IMR-90 (cell line): ENCODE measurements at regions of chr9 and their contacts with region 1.

Region 1: DNA sequence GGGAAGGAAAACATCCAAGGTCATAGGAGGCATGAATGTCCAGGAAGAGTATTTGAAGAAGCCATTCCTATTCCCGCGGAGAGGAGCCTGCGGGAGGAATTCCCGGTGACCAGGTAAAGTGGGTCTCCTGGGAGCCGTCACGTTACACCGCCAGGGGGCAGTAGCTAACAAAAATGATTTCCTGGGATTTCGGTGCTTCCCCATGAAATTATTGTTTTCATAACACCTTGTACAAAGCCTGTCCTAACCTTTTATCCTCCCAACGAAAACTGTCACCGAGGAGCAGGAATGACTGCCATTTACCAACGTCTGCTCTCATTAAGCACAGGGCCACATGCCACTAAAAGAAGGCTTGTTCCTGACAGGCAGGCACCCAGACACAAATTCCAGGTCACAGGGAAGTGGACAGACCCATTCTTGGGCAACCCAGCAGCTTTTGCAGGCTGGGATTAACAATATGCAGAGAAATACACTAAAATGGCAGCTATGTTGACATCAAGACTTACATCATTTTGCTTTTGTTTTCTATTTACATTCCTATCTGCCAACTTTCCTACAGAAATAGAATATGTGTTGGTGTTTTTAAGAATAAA is 41.2 kb upstream of the CTSL start:
- DNase-seq: peak; percentile 24
- ATAC-seq: peak; percentile 40; the same call in 1 of the 2 replicates
- H3K4me3 ChIP-seq: no peak overlapping the region
- H3K27ac ChIP-seq: no peak overlapping the region
- H3K4me1 ChIP-seq: peaks cover 4% of the 10 kb centered on the region
- H3K27me3 ChIP-seq: peaks cover 2% of the 10 kb centered on the region
- CTCF ChIP-seq: peak; percentile 70
- POLR2A ChIP-seq: no peak
- RAD21 ChIP-seq: peak; percentile 68

Region 2: DNA sequence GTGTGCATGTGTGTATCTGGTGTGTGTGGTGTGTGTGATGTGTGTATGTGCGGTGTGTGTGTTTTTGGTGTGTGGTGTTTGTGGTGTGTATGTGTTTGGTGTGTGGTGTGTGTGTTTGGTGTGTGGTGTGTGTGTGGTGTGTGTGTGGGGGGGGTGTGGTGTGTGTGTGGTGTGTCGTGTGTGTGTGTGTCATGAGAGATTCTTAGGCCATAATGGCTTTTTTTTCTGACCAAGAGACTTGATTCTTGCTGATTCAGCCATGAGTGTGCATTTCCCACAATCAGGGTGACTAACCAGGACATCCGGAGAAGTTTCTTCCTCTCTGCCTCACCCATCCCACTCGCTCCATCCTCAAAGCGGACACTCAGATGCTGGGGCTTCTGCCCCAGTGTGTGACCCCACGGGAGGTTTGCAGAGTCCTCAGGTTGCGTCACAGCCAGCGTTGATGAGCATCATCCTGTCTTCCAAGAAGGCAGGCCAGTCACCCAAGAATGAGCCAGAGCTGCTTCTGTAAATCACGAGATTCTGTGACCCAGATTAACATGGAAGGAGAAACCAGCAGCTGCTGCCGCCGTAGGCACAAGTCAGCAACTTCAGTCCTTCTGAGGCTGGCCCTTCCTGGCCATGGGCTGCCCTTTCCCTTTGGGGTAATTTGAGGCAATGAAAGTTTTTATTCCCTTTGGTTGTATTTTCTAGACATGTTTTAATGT is 28.7 kb after region 1 on chr9:
- CTCF ChIA-PET with region 1: interaction called, 13 read pairs
- POLR2A ChIA-PET with region 1: no interaction called
- dilution Hi-C with region 1: no loop called
- in situ Hi-C with region 1: no loop called
- intact Hi-C with region 1: no loop called
- DNase-seq: peak; percentile 99
- ATAC-seq: peak; percentile 87
- H3K4me3 ChIP-seq: peak overlapping the region; percentile 3; the same call in 1 of the 2 replicates
- H3K27ac ChIP-seq: peak overlapping the region; percentile 98
- H3K4me1 ChIP-seq: peaks cover 16% of the 10 kb centered on the region
- H3K27me3 ChIP-seq: no peaks in the 10 kb centered on the region
- CTCF ChIP-seq: 0 out of 2 replicates have a peak, but pooled peaks have one; percentile 8
- POLR2A ChIP-seq: peak; percentile 84
- RAD21 ChIP-seq: no peak

Region 3: DNA sequence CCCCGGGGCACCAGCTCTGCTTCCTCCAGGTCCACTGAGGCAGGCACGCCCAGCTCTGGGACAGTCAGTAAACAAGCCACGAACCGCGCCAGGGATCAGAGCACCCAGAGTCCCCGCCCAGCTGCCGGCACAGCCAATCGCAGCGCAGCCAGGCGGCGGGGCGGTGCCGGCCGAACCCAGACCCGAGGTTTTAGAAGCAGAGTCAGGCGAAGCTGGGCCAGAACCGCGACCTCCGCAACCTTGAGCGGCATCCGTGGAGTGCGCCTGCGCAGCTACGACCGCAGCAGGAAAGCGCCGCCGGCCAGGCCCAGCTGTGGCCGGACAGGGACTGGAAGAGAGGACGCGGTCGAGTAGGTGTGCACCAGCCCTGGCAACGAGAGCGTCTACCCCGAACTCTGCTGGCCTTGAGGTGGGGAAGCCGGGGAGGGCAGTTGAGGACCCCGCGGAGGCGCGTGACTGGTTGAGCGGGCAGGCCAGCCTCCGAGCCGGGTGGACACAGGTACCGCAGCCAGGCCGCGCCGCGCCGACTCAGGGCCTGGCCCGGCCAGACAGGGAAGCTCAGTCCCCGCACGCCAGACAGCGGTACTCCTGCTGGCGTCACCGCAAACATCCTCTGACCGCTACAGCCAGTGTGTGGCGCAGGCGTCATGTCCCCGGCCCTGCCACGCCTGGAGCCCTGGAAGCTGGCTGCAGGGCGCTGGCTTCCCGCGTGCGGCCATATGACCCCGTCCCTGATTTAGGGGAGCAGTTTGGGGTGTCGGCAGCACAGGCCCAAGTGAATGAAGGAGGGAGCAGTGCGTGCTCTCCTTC is 41.4 kb after region 1 on chr9 and contains the start of gene CTSL:
- CTCF ChIA-PET with region 1: no interaction called
- POLR2A ChIA-PET with region 1: no interaction called
- dilution Hi-C with region 1: no loop called
- in situ Hi-C with region 1: no loop called
- intact Hi-C with region 1: loop called (anchors 2 kb)
- DNase-seq: peak; percentile 76
- ATAC-seq: peak; percentile 96
- H3K4me3 ChIP-seq: peak within 1 kb of the TSS; percentile 60
- H3K27ac ChIP-seq: peak within 1 kb of the TSS; percentile 70
- H3K4me1 ChIP-seq: no peaks in the 10 kb centered on the region; the same call in 1 of the 2 replicates
- H3K27me3 ChIP-seq: no peaks in the 10 kb centered on the region
- CTCF ChIP-seq: peak; percentile 23
- POLR2A ChIP-seq: peak; percentile 91
- RAD21 ChIP-seq: no peak
- total RNA-seq, gene CTSL: 57.0 and 89.7 TPM in 2 replicates